ENCODE measurements at regions of chr19 and their contacts with region 1.

Region 1: GRCh38 chr19:56080669-56081401 is 40.3 kb downstream of the ZNF787 start:
- DNase-seq: peak; percentile 45 to 50
- H3K4me3 ChIP-seq: no peak overlapping the region
- H3K27ac ChIP-seq: no peak overlapping the region
- H3K4me1 ChIP-seq: peaks cover 0 to 5% of the 10 kb centered on the region in 2 donors
- H3K27me3 ChIP-seq: no peaks in the 10 kb centered on the region
- CTCF ChIP-seq: peak; percentile 15 to 46 (median 32)
- POLR2A ChIP-seq: no peak

Region 2: DNA sequence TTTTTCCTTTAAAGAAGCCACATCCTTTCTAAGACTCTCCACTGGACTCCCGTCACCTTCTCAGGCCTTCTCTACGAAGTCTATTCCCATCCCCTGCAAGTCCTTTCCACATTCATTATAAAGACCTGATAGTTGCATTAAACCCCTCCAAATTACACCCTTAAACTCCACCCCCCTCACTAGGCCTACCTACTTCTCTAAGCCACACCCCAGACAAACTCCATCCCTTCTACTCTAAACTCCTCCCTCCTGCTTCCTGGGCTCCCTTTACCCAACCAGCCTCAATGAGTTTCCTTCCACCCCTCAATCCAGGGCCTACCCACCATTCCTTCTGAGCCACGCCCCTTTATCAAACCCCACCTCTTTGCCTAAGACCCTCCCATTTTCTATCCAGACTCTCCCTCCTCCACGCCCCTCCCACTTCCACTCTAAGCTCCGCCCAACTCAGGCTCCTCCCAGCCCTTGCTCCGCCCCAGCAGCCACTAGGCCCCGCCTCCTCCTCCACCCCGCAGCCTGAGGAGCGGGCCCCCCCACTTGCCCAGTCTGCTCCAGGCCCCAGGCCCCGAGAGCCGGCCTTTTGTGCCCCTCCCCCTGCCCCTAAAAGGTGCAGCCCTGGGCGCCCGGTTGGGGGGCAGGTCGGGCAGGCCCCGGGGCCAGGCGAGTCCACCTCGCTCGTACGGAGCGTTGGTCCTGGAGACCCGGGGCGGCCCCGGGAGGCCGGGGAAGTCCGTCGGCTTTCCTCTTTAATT is 481.9 kb before region 1 on chr19:
- intact Hi-C with region 1: no loop called
- DNase-seq: peak; percentile 95 to 96
- H3K4me3 ChIP-seq: peak overlapping the region; percentile 82 to 87
- H3K27ac ChIP-seq: peak overlapping the region; percentile 94 to 99
- H3K4me1 ChIP-seq: peaks cover 0 to 6% of the 10 kb centered on the region in 2 donors
- H3K27me3 ChIP-seq: no peaks in the 10 kb centered on the region
- CTCF ChIP-seq: no peak
- POLR2A ChIP-seq: peak in 1 of 2 donors; percentile 50

Region 3: DNA sequence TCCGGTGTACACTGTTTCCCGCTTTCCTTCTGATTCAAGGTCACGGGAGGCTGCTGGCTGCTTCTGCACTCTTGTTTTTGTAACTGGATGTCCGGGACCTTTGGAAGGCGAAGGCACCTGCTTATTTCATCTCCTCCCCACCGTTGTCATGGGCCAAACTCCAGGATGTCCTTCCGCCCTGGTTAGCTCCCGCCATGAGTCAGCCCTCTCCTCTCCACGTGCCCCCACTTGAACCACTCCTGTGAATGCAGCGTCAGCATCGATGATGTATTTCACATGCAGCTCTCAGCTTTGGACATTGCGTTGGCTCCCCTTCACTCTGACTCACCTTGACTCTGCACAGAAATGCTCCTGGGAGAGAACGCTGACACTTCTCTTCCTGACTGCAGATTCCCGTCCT is 89.4 kb after region 1 on chr19:
- intact Hi-C with region 1: loop called (anchors 5 kb)
- DNase-seq: no peak
- H3K4me3 ChIP-seq: no peak overlapping the region
- H3K27ac ChIP-seq: no peak overlapping the region
- H3K4me1 ChIP-seq: no peaks in the 10 kb centered on the region
- H3K27me3 ChIP-seq: no peaks in the 10 kb centered on the region
- CTCF ChIP-seq: no peak
- POLR2A ChIP-seq: no peak

Region 4: GRCh38 chr19:56637976-56638555 is 557.2 kb after region 1 on chr19:
- intact Hi-C with region 1: loop called (anchors 10 kb)
- DNase-seq: peak; percentile 23 to 35
- H3K4me3 ChIP-seq: no peak overlapping the region
- H3K27ac ChIP-seq: no peak overlapping the region
- H3K4me1 ChIP-seq: no peaks in the 10 kb centered on the region
- H3K27me3 ChIP-seq: peaks cover 0 to under 1% of the 10 kb centered on the region in 2 donors
- CTCF ChIP-seq: no peak
- POLR2A ChIP-seq: no peak

Measured in uterus (tissue), 4 donors.